Psoas muscle (tissue), 8 donors: ENCODE measurements at regions of chr20 and their contacts with region 1.

Region 1: GRCh38 chr20:35788796-35789195 is 17.0 kb downstream of the PHF20 start:
- DNase-seq: no peak
- ATAC-seq: no peak
- H3K4me3 ChIP-seq: no peak overlapping the region
- H3K27ac ChIP-seq: no peak overlapping the region
- H3K4me1 ChIP-seq: peaks cover 7% of the 10 kb centered on the region
- H3K27me3 ChIP-seq: no peaks in the 10 kb centered on the region
- CTCF ChIP-seq: no peak

Region 2: DNA sequence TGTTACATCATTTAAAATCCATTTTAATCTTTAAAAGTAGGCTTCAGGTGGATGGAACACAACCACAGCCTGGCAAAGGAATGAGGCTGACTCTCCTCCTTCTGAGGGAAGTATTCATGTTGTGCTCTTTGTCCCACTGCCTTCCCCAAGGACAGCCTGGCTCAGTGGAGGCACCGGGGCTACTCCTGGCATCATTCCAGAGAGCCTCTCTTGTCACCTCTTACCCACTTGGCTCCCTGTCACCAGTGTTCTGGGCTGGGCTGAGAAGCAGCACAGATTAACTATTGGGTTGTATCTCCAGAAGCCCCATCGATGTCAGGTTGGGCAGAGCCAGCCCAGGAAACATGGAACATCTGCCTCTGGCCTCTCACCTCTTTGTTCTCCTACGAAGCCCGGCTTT is 1095.4 kb before region 1 on chr20:
- intact Hi-C with region 1: no loop called
- DNase-seq: no peak
- ATAC-seq: peak in 1 of 4 donors; percentile 50
- H3K4me3 ChIP-seq: no peak overlapping the region
- H3K27ac ChIP-seq: no peak overlapping the region
- H3K4me1 ChIP-seq: no peaks in the 10 kb centered on the region
- H3K27me3 ChIP-seq: no peaks in the 10 kb centered on the region
- CTCF ChIP-seq: no peak

Region 3: GRCh38 chr20:35604449-35604747 is 184.4 kb before region 1 on chr20:
- intact Hi-C with region 1: no loop called
- DNase-seq: peak in 1 of 2 donors; percentile 33
- ATAC-seq: no peak
- H3K4me3 ChIP-seq: no peak overlapping the region
- H3K27ac ChIP-seq: no peak overlapping the region
- H3K4me1 ChIP-seq: peaks cover 11% of the 10 kb centered on the region
- H3K27me3 ChIP-seq: peaks cover 0 to 9% (median 0%) of the 10 kb centered on the region in 3 donors
- CTCF ChIP-seq: no peak

Region 4: DNA sequence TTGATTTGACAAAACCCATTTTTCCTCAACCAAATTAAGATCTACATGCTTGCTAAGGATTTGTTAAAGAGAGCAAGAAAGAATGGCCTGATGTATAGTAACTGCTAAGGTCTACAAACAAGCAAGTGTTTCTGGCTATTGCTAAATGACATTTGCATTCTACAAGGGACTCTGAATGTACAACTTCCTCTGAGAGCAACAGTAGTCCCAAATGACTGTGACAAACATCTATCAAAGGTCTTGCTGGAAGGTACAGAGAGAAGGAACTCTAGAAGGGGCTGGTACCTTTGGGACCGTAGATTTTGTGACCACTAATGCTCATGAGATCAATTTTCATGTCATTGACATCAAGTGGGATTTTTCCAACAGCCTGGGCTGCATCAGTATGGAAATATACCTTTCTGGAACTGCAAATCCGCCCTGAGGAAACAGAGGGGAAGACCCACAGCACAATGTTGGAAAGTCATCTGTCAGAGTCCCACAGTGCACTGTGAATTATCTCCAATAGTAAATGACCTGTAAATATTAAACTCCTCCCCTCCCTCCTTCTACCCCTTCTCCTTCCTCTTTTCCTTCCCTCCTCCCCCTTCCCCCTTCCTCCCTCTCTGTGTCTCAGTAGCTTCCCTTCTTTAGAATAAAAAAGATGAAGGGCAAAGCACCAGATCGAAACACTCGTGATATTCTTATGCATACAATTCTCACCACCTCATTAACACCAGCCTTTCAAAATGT is 108.2 kb before region 1 on chr20:
- intact Hi-C with region 1: no loop called
- DNase-seq: no peak
- ATAC-seq: no peak
- H3K4me3 ChIP-seq: no peak overlapping the region
- H3K27ac ChIP-seq: no peak overlapping the region
- H3K4me1 ChIP-seq: no peaks in the 10 kb centered on the region
- H3K27me3 ChIP-seq: no peaks in the 10 kb centered on the region
- CTCF ChIP-seq: no peak

Region 5: DNA sequence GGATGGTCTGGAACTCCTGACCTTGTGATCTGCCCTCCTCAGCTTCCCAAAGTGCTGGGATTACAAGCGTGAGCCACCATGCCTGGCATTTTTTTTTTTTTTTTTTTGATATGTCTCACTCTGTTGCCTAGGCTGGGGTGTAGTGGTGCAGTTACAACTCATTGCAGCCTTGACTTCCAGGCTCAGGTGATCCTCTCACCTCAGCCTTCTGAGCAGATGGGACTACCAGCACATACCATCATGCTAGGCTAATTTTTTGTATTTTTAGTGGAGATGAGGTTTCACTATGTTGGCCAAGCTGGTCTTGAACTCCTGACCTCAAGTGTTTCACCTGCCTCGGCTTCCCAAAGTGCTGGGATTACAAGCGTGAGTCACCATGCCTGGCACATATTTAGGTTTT is 17.3 kb after region 1 on chr20:
- intact Hi-C with region 1: loop called in 1 of 2 experiments (anchors 2 kb)
- DNase-seq: no peak
- ATAC-seq: peak; percentile 27 to 61 (median 52)
- H3K4me3 ChIP-seq: no peak overlapping the region
- H3K27ac ChIP-seq: peak overlapping the region; percentile 4
- H3K4me1 ChIP-seq: no peaks in the 10 kb centered on the region
- H3K27me3 ChIP-seq: no peaks in the 10 kb centered on the region
- CTCF ChIP-seq: no peak

Region 6: DNA sequence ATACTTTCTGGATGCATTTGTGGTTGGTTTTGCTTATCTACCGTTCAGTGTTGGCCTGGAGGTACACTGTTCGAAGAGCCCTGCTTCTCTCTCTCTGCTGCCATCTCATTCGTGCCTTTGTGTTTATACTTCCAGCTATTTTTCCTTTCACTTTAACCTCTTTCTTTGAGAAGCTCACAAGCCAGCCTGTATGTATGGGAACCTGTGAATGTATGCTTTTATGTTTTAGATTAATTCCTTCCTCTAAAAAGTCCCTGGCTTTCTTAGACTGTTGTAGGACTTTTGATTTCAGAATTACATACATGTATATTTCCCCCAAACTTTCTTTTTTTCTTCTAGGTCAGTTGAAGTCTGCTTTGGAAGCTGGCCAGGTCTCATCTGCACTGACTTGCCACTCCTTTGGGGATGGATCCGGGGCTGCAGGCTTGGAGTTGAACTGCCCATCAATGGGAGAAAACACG is 82.5 kb after region 1 on chr20:
- intact Hi-C with region 1: no loop called
- DNase-seq: no peak
- ATAC-seq: no peak
- H3K4me3 ChIP-seq: peak overlapping the region; percentile 0
- H3K27ac ChIP-seq: peak overlapping the region; percentile 82
- H3K4me1 ChIP-seq: peaks cover 18% of the 10 kb centered on the region
- H3K27me3 ChIP-seq: no peaks in the 10 kb centered on the region
- CTCF ChIP-seq: no peak